ENCODE measurements at regions of chr11 and their contacts with region 1.

Region 1: DNA sequence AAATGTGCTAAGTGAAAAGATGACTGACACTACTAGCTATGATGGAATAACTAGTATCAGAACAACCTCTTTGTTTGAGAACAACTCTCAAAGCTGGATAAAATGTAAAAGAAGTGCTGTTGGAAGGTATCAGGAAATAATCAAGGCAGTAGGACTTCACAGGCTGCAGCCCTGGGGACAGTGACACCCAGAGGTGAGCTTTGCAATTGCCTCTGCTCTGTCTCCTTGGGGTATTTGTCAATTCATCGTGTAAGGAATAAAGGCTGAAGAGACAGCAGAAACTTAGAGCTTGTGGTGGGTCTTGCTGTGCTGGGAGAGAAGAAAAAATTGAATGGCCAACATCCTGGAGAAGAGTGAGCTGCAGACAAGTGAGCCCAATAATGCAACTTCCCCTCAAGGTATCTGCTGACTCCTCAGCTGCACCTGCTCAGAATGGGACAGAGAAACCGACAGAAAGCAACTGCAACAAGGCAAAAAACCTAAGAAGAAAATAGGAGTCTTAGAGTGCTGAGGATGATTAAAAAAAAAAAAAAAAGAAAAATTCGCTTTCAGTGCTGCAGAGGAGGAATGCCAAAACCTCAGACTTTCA is 141.1 kb downstream of the RCN1 start:
- DNase-seq: peak; percentile 23 to 58
- H3K4me3 ChIP-seq: no peak overlapping the region
- H3K27ac ChIP-seq: no peak overlapping the region
- H3K4me1 ChIP-seq: no peaks in the 10 kb centered on the region
- H3K27me3 ChIP-seq: no peaks in the 10 kb centered on the region
- CTCF ChIP-seq: peak; percentile 73 to 93 (median 86)
- EP300 ChIP-seq: no peak
- POLR2A ChIP-seq: no peak
- RAD21 ChIP-seq: peak; percentile 61 to 72

Region 2: GRCh38 chr11:32198053-32198452 is 33.9 kb before region 1 on chr11:
- CTCF ChIA-PET with region 1: interaction called, 17 read pairs
- POLR2A ChIA-PET with region 1: no interaction called
- DNase-seq: no peak
- H3K4me3 ChIP-seq: no peak overlapping the region
- H3K27ac ChIP-seq: no peak overlapping the region
- H3K4me1 ChIP-seq: no peaks in the 10 kb centered on the region
- H3K27me3 ChIP-seq: no peaks in the 10 kb centered on the region
- CTCF ChIP-seq: no peak
- EP300 ChIP-seq: no peak
- POLR2A ChIP-seq: no peak
- RAD21 ChIP-seq: no peak

Region 3: DNA sequence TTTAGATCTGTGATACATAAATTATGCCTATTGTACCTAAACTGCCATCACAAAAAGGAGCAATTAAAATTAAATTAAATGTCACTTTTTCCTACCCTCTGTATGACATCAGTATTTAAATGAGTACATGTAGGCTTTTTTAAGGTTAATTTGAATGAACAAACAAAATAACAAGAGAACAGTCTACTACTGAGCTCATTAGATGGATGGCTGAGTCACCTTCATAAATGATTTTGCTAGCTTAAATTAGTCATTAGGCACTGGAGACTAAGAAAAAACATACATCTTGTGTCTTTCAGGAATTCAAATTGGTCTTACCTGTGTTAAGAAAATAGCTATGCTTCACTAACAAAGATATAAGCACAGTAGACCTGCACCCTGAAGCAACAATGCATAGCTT is 12.5 kb after region 1 on chr11:
- CTCF ChIA-PET with region 1: interaction called, 11 read pairs
- POLR2A ChIA-PET with region 1: interaction called, 3 read pairs
- DNase-seq: no peak
- H3K4me3 ChIP-seq: no peak overlapping the region
- H3K27ac ChIP-seq: no peak overlapping the region
- H3K4me1 ChIP-seq: no peaks in the 10 kb centered on the region
- H3K27me3 ChIP-seq: no peaks in the 10 kb centered on the region
- CTCF ChIP-seq: no peak
- EP300 ChIP-seq: no peak
- POLR2A ChIP-seq: no peak
- RAD21 ChIP-seq: no peak

Measured in H1 (cell line).